ENCODE measurements at regions of chr10 and their contacts with region 1.

Region 1: GRCh38 chr10:111650088-111650487 is 533.5 kb downstream of the GPAM start:
- DNase-seq: peak; percentile 44
- ATAC-seq: no peak; the same call in 1 of the 2 replicates
- H3K4me3 Mint-ChIP-seq: no peak overlapping the region
- H3K27ac Mint-ChIP-seq: no peak overlapping the region
- H3K4me1 Mint-ChIP-seq: no peaks in the 10 kb centered on the region
- H3K27me3 Mint-ChIP-seq: peaks cover 2% of the 10 kb centered on the region; the same call in 1 of the 2 replicates
- CTCF ChIP-seq: no peak

Region 2: DNA sequence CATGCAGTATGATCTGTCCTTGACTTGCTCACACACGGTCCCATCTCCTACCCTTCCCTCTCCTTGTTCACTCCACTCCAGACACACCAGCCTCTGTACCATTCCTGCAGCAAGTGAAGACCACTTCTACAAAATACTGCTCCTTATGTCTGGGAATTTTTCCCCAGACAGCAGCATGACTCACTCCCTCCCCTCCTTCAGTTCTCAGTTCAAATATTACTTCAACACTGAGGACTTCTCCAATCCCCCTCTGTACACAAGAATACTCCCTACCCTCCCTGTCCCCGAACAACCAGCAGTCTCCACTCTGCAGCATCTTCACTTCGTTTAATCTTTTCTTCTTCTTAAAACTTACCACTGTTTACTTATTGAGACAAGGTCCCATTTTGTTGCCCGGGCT is 59.5 kb after region 1 on chr10:
- CTCF ChIA-PET with region 1: no interaction called
- POLR2A ChIA-PET with region 1: interaction called, 10 read pairs
- DNase-seq: no peak
- ATAC-seq: no peak
- H3K4me3 Mint-ChIP-seq: no peak overlapping the region
- H3K27ac Mint-ChIP-seq: no peak overlapping the region
- H3K4me1 Mint-ChIP-seq: no peaks in the 10 kb centered on the region
- H3K27me3 Mint-ChIP-seq: no peaks in the 10 kb centered on the region
- CTCF ChIP-seq: no peak

Region 3: DNA sequence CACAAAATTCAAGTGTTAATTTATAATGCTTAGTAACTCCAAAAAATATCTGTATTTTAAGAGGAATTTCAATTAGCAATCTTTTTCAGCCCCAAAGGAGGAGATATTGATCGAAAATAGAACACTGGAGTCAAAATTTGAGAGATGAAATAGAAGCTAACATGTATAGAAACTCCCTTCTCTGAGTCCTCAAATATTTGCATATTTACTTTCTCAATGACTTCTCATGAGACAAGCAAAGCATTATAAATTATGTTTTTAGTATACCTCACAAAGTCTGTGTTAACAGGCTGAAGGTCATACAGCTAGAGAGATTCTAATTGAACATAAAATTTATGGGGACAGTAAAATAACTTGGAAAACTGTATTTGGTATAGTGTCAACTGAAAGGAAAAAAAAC is 272.9 kb after region 1 on chr10:
- CTCF ChIA-PET with region 1: no interaction called
- POLR2A ChIA-PET with region 1: no interaction called
- DNase-seq: no peak
- ATAC-seq: no peak
- H3K4me3 Mint-ChIP-seq: no peak overlapping the region
- H3K27ac Mint-ChIP-seq: no peak overlapping the region
- H3K4me1 Mint-ChIP-seq: peaks cover 15% of the 10 kb centered on the region
- H3K27me3 Mint-ChIP-seq: no peaks in the 10 kb centered on the region
- CTCF ChIP-seq: no peak